Posterior cingulate gyrus (tissue), 11 donors: ENCODE measurements at regions of chr12 and their contacts with region 1.

Region 1: DNA sequence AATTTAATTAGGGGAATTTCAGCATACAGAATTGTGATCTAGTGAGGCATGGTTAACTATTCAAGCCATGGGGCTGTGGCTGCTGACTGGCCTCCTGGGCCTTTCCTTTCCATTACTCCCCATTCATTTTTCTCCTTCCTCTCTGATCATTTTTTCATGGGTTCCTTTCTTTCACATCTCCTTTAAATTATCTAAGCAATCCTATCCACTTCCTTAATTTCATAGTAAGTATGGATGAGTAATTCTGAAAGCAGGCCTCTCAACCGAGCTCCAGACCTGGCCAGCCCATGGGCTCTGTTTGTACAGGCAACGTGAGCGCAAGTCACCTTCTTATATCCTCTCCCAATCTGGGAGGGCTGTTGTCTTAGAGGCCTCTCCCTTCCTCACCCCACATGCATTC is 13.4 kb downstream of the CKAP4 start:
- DNase-seq: no peak

Region 2: GRCh38 chr12:106919910-106920544 is 685.6 kb after region 1 on chr12:
- intact Hi-C with region 1: loop called (anchors 10 kb)
- DNase-seq: no peak